Pancreas (tissue), 10 donors: ENCODE measurements at regions of chr17 and their contacts with region 1.

Region 1: GRCh38 chr17:51153210-51154072 is at the start of gene NME1:
- DNase-seq: peak; percentile 92 to 97 (median 97)
- ATAC-seq: peak; percentile 94 to 96 (median 96)
- H3K4me3 ChIP-seq: peak within 1 kb of the TSS; percentile 64 to 77 (median 74)
- H3K27ac ChIP-seq: peak within 1 kb of the TSS; percentile 57 to 88 (median 81)
- H3K4me1 ChIP-seq: peaks cover 0 to 10% (median 7%) of the 10 kb centered on the region in 3 donors
- H3K27me3 ChIP-seq: no peaks in the 10 kb centered on the region
- CTCF ChIP-seq: peak; percentile 29 to 61 (median 40)
- total RNA-seq, gene NME1: 15.6 to 49.1 (median 34.8) TPM

Region 2: GRCh38 chr17:50993544-50993943 is 159.9 kb before region 1 on chr17:
- intact Hi-C with region 1: loop called in 1 of 3 experiments (anchors 10 kb)
- DNase-seq: no peak
- ATAC-seq: peak in 2 of 4 donors; percentile 40 to 58
- H3K4me3 ChIP-seq: no peak overlapping the region
- H3K27ac ChIP-seq: no peak overlapping the region
- H3K4me1 ChIP-seq: no peaks in the 10 kb centered on the region
- H3K27me3 ChIP-seq: no peaks in the 10 kb centered on the region
- CTCF ChIP-seq: no peak

Region 3: DNA sequence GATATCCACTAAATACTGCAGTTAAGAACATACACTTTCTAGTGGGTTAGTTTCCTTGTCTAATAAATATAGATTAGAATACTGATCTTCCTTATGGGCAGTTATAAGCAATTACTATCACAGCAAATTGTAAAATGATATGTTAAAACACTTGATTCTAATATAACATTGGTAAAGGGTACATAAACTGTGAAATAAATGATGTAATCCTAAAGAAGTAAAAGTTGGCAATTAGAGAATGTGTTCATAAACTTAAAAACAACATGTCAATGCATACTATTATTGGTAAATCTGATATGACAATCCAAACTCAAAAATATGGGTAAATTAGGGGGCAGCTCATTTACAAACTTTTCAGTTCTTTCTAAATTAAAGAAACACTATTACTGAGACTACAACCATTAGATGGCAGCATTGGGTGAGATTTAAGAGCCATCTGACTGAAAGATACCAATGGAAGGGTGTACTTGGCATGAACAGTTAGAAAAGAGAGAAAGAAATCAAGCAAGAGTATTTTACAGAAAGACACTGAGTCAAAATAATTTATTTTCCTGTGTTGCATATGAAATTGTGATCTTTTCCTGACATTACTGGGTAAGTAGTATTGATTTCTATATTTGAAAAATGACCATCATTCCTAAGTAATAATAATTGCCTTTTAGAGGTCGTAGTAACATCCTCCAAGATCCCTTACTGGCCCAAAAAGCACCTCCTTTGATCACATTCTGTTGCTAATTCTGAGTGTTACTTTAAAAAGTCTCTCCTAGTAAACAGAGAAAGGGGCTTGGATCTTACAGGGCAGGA is 152.4 kb before region 1 on chr17:
- intact Hi-C with region 1: loop called in 2 of 3 experiments (anchors 5 to 10 kb)
- DNase-seq: no peak
- ATAC-seq: peak in 3 of 4 donors; percentile 87 to 92 (median 90)
- H3K4me3 ChIP-seq: no peak overlapping the region
- H3K27ac ChIP-seq: no peak overlapping the region
- H3K4me1 ChIP-seq: peaks cover 0 to 4% (median 0%) of the 10 kb centered on the region in 3 donors
- H3K27me3 ChIP-seq: no peaks in the 10 kb centered on the region
- CTCF ChIP-seq: peak in 3 of 4 donors; percentile 19 to 32 (median 19)

Region 4: DNA sequence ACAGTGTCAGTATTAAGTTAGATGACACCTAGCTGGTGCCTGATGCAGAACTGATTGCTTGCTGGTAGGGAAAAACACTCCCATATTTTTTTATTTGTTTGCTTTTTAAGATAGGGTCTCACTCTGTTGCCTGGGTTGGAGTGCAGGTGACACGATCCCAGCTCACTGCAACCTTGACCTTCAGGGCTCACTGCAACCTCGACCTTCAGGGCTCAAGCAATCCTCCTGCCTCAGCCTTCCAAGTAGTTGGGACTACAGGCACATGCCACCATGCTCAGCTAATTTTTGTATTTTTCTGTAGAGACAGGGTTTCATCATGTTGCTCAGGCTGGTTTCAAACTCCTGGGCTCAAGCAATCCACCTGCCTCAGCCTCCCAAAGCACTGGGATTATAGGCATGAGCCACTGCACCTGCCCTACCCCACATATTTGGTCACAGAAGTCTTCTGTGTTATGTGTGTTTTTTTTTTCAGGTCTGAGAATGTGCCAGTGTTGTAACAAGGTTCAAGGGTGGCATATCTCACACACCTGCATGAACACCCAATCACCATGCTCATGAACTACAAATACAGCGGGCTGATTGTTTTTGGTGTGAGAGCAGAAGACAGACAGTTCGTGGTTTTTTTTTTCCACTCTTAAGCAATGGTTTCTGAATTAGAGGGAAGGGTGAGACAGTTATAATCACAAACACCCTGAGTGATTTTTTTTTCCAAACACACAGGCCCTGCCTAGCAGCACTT is 55.6 kb before region 1 on chr17:
- intact Hi-C with region 1: no loop called
- DNase-seq: peak in 3 of 6 donors; percentile 39 to 50 (median 48)
- ATAC-seq: peak; percentile 80 to 92 (median 88)
- H3K4me3 ChIP-seq: peak overlapping the region in 1 of 4 donors; percentile 17
- H3K27ac ChIP-seq: peak overlapping the region; percentile 19 to 87 (median 70)
- H3K4me1 ChIP-seq: peaks cover 15 to 26% (median 25%) of the 10 kb centered on the region in 3 donors
- H3K27me3 ChIP-seq: no peaks in the 10 kb centered on the region
- CTCF ChIP-seq: no peak

Region 5: DNA sequence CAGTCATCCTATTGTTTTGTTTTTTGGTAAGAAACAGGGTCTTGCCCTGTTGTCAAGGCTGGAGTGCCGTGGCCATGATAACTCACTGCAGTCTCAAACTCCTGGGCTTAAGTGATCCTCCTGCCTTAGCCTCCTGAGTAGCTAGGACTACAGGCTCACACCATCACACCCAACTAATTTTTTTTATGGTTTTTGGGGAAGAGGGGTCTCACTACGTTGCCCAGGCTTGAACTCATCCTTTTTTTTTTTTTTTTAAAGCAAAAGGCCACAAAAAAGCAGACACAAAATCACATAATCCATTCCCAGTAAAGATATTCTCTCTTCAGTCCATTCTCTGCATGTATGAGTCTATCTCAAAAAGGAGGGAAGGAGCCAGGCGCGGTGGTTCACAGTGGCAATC is 38.3 kb before region 1 on chr17:
- intact Hi-C with region 1: no loop called
- DNase-seq: no peak
- ATAC-seq: no peak
- H3K4me3 ChIP-seq: no peak overlapping the region
- H3K27ac ChIP-seq: no peak overlapping the region
- H3K4me1 ChIP-seq: peaks cover 12 to 35% (median 14%) of the 10 kb centered on the region in 3 donors
- H3K27me3 ChIP-seq: no peaks in the 10 kb centered on the region
- CTCF ChIP-seq: no peak

Region 6: GRCh38 chr17:51189628-51190027 is 36.2 kb after region 1 on chr17:
- intact Hi-C with region 1: no loop called
- DNase-seq: no peak
- ATAC-seq: no peak
- H3K4me3 ChIP-seq: no peak overlapping the region
- H3K27ac ChIP-seq: no peak overlapping the region
- H3K4me1 ChIP-seq: no peaks in the 10 kb centered on the region
- H3K27me3 ChIP-seq: no peaks in the 10 kb centered on the region
- CTCF ChIP-seq: no peak